ENCODE measurements at regions of chr1 and their contacts with region 1.

Region 1: GRCh38 chr1:160777486-160778089 is 18.4 kb upstream of the LY9 start:
- DNase-seq: peak; percentile 57
- CTCF ChIP-seq: peak; percentile 74

Region 2: GRCh38 chr1:160681067-160681890 is 96.3 kb before region 1 on chr1:
- CTCF ChIA-PET with region 1: interaction called, 18 read pairs
- POLR2A ChIA-PET with region 1: no interaction called
- DNase-seq: peak; percentile 55
- CTCF ChIP-seq: peak; percentile 93

Region 3: GRCh38 chr1:160726498-160727315 is 50.9 kb before region 1 on chr1:
- CTCF ChIA-PET with region 1: interaction called, 37 read pairs
- POLR2A ChIA-PET with region 1: interaction called, 6 read pairs
- DNase-seq: peak; percentile 62
- CTCF ChIP-seq: peak; percentile 80

Region 4: GRCh38 chr1:160748181-160748877 is 29.3 kb before region 1 on chr1:
- CTCF ChIA-PET with region 1: interaction called, 17 read pairs
- POLR2A ChIA-PET with region 1: no interaction called
- DNase-seq: no peak
- CTCF ChIP-seq: peak; percentile 37

Region 5: DNA sequence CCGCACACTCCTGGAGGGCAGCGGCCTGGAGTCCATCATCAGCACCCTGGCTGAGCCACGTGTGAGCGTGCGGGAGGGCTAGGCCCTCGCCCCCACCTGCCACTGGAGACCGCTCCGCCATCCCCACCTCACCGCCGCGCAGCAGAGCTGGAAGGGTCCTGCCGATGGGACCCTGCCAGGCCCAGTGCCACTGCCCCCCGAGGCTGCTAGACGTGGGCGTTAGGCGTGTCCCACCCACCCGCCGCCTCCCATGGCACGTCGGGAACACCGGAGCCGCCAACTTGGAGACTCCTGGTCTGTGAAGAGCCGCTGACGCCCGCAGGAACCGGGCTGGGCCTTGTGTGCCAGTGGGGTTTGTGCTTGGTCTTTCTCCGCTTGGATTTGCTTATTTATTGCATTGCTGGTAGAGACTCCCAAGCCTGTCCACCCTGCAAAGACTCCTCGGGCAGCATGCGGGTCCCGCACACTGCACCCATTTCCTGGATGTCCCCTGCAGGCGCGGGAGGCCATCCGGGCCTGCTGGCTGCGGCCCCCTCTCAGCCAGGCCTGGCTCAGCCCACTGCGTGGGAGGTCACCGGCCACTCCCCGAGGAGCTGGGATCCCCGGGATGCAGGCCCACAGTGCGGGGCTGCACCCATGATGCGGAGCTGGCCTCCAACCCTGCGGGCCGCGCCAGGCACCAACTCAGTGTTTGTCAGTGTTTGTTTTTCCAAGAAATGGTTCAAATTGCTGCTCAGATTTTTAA is 24.4 kb after region 1 on chr1:
- CTCF ChIA-PET with region 1: interaction called, 190 read pairs
- POLR2A ChIA-PET with region 1: no interaction called
- DNase-seq: no peak
- CTCF ChIP-seq: no peak

Region 6: DNA sequence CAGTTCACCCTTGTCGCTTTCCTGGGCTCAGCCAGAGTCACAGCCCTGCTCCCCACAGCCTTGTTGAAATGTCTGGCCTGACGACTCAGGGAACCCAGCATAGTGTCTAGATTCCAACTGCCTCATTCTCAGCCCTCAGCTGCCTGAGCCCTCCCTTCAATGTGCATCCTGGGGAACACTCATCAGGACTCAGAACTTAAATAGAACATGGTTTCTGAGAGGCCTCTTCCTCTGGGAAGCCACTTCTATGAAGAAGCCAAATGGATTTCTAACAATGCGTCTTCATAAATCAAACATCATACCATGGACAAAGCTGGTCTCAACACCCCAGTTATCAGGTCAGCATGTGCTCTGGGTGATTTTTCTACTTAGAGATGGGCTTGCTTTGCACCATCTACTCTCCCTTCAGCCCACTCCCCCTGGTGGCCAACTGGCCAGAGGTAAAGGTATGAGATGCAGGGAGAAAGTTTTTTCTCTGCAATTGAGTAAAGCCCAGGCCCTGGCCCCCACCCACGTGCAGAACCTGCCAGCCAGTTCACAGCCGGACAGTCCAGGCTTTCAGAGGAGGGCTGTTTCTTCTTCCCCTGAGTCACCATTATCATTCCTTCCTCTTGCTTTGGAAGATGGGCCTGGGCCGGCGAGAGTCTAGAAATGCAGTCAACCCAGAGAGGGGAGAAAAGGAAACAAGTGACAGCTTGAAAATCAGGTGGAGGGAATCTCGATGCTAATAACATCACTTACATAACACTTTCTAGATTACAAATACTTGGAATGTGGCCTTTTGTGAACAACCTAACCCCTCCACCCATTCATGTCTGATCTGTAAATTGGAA is 52.9 kb after region 1 on chr1:
- CTCF ChIA-PET with region 1: interaction called, 81 read pairs
- POLR2A ChIA-PET with region 1: no interaction called
- DNase-seq: peak; percentile 65
- CTCF ChIP-seq: peak; percentile 72

Region 7: GRCh38 chr1:160925652-160926241 is 148.2 kb after region 1 on chr1:
- CTCF ChIA-PET with region 1: no interaction called
- POLR2A ChIA-PET with region 1: no interaction called
- DNase-seq: no peak
- CTCF ChIP-seq: no peak

Measured in GM10248 (cell line).